Gastrocnemius medialis (tissue), 4 donors: ENCODE measurements at regions of chr17 and their contacts with region 1.

Region 1: GRCh38 chr17:32495359-32496231 is 8.8 kb downstream of the CDK5R1 start:
- DNase-seq: peak; percentile 85 to 87
- ATAC-seq: peak; percentile 67 to 70
- H3K4me3 ChIP-seq: peak overlapping the region; percentile 32 to 55 (median 38)
- H3K27ac ChIP-seq: peak overlapping the region; percentile 80 to 91 (median 87)
- H3K4me1 ChIP-seq: peaks cover 31 to 35% of the 10 kb centered on the region in 2 donors
- H3K27me3 ChIP-seq: no peaks in the 10 kb centered on the region
- CTCF ChIP-seq: no peak
- POLR2A ChIP-seq: no peak

Region 2: GRCh38 chr17:32215696-32216095 is 279.9 kb before region 1 on chr17:
- in situ Hi-C with region 1: no loop called
- intact Hi-C with region 1: no loop called
- DNase-seq: no peak
- ATAC-seq: no peak
- H3K4me3 ChIP-seq: no peak overlapping the region
- H3K27ac ChIP-seq: no peak overlapping the region
- H3K4me1 ChIP-seq: no peaks in the 10 kb centered on the region
- H3K27me3 ChIP-seq: no peaks in the 10 kb centered on the region
- CTCF ChIP-seq: no peak
- POLR2A ChIP-seq: no peak

Region 3: GRCh38 chr17:32444308-32445073 is 51.1 kb before region 1 on chr17 and contains the start of gene PSMD11:
- in situ Hi-C with region 1: no loop called
- intact Hi-C with region 1: loop called (anchors 2 kb)
- DNase-seq: peak; percentile 95 to 98
- ATAC-seq: peak; percentile 85 to 86
- H3K4me3 ChIP-seq: peak within 1 kb of the TSS; percentile 89 to 100 (median 92)
- H3K27ac ChIP-seq: peak within 1 kb of the TSS; percentile 90 to 99 (median 98)
- H3K4me1 ChIP-seq: peaks cover 32 to 37% of the 10 kb centered on the region in 2 donors
- H3K27me3 ChIP-seq: no peaks in the 10 kb centered on the region
- CTCF ChIP-seq: peak; percentile 78 to 95 (median 87)
- POLR2A ChIP-seq: peak; percentile 90 to 92
- total RNA-seq, gene PSMD11: 81.7 to 215 (median 191) TPM

Region 4: DNA sequence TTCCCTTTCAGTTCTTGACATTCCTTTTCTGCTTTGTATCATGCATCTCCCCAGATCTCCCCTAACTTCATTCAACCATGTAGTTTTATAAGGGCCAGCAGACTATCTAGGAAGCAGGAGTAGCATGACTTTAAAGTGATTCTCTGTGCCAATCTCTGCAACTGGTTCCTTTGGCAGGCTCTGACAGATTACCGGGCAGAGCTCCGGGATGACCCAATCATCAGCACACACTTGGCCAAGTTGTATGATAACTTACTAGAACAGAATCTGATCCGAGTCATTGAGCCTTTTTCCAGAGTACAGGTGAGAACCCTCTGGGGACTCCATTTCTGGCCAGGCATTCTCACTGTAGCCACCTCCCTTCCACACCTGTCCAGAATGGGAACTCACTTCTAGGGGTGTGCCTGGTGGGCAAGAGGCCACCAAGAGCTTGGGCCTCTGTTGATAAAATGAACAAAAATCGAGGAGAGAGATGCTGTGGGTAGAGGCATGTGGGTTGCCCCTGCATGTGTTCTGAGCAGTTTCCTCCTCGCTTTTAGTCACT is 16.4 kb before region 1 on chr17:
- in situ Hi-C with region 1: no loop called
- intact Hi-C with region 1: no loop called
- DNase-seq: peak; percentile 55 to 79
- ATAC-seq: peak; percentile 86 to 87
- H3K4me3 ChIP-seq: no peak overlapping the region
- H3K27ac ChIP-seq: peak overlapping the region; percentile 48 to 66 (median 64)
- H3K4me1 ChIP-seq: peaks cover 6 to 10% of the 10 kb centered on the region in 2 donors
- H3K27me3 ChIP-seq: no peaks in the 10 kb centered on the region
- CTCF ChIP-seq: no peak
- POLR2A ChIP-seq: no peak

Region 5: GRCh38 chr17:32515677-32516383 is 20.2 kb after region 1 on chr17:
- in situ Hi-C with region 1: no loop called
- intact Hi-C with region 1: loop called (anchors 2 kb)
- DNase-seq: no peak
- ATAC-seq: peak; percentile 81 to 84
- H3K4me3 ChIP-seq: no peak overlapping the region
- H3K27ac ChIP-seq: peak overlapping the region in 3 of 4 donors; percentile 38 to 66 (median 57)
- H3K4me1 ChIP-seq: peaks cover 30 to 32% of the 10 kb centered on the region in 2 donors
- H3K27me3 ChIP-seq: no peaks in the 10 kb centered on the region
- CTCF ChIP-seq: no peak
- POLR2A ChIP-seq: no peak

Region 6: GRCh38 chr17:32609085-32609484 is 113.5 kb after region 1 on chr17:
- in situ Hi-C with region 1: no loop called
- intact Hi-C with region 1: loop called (anchors 2 kb)
- DNase-seq: peak; percentile 36 to 52
- ATAC-seq: peak in 1 of 2 donors; percentile 73
- H3K4me3 ChIP-seq: no peak overlapping the region
- H3K27ac ChIP-seq: no peak overlapping the region
- H3K4me1 ChIP-seq: no peaks in the 10 kb centered on the region
- H3K27me3 ChIP-seq: no peaks in the 10 kb centered on the region
- CTCF ChIP-seq: peak in 4 of 5 experiments; percentile 17 to 44 (median 31)
- POLR2A ChIP-seq: no peak

Region 7: DNA sequence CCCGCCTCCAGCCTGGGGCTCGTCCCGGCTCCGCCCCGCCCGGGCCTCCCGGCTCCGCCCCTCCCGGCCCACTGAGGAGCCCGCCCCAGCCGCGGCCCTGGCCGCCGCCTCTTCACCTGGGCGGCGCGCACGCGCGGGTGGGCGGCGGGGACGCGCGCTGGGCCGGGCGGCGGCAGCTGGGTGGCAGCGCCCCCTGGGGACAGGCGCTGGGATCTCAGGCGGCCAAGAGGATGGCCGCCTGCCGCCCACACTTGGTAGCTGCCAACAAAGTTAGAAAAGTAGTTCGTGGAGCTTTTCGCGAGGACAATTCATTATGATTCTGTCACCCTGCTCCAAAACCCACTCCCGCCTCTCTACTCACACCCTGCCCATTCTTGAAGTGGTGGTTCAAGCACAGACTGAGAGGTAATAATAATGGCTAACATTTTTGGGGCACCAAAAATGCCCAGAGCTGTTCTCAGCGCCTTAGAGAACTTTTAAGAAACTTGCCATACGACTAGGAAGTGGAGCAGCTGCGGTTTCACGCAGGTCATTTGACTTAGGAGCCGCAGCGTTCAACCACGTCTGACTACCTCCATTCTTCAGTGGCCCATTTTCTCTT is 381.7 kb after region 1 on chr17:
- in situ Hi-C with region 1: loop called in 1 of 4 experiments (anchors 25 kb)
- intact Hi-C with region 1: loop called (anchors 5 kb)
- DNase-seq: peak; percentile 67 to 86
- ATAC-seq: peak; percentile 97
- H3K4me3 ChIP-seq: peak overlapping the region; percentile 60 to 85 (median 64)
- H3K27ac ChIP-seq: peak overlapping the region; percentile 38 to 79 (median 57)
- H3K4me1 ChIP-seq: no peaks in the 10 kb centered on the region
- H3K27me3 ChIP-seq: peaks cover 0 to 3% (median 0%) of the 10 kb centered on the region in 3 donors
- CTCF ChIP-seq: peak; percentile 78 to 99 (median 97)
- POLR2A ChIP-seq: no peak

Region 8: GRCh38 chr17:33421933-33422332 is 926.3 kb after region 1 on chr17:
- in situ Hi-C with region 1: no loop called
- intact Hi-C with region 1: no loop called
- DNase-seq: no peak
- ATAC-seq: no peak
- H3K4me3 ChIP-seq: no peak overlapping the region
- H3K27ac ChIP-seq: no peak overlapping the region
- H3K4me1 ChIP-seq: no peaks in the 10 kb centered on the region
- H3K27me3 ChIP-seq: no peaks in the 10 kb centered on the region
- CTCF ChIP-seq: no peak
- POLR2A ChIP-seq: no peak